Dendritic cell treated with granulocyte-macrophage colony-stimulating factor and Interleukin-4, amounts not matched to agents 40 ng/mL and 50 ng/mL, for 4 days (primary cell): ENCODE measurements at regions of chr20 and their contacts with region 1.

Region 1: DNA sequence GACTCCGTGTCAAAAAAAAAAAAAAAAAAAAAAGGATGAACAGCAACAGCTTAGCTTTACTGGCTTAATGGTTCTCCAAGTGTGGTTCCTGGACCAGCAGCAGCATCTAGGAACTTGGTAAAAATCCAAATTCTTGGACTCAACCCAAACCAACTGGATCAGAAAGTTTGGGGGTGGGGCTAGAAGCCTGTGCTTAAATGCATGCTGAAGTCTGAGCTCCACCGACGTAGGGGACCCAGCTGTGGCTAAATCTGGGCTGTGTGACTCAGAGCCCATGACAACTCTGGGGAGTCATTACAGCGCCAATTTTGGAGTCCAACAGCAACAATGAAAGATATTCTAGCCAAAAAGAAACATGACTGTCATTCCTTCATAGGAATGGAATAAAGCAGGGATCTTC is 13.6 kb upstream of the CHD6 start:
- H3K4me3 Mint-ChIP-seq: no peak overlapping the region
- H3K27ac Mint-ChIP-seq: no peak overlapping the region
- H3K4me1 Mint-ChIP-seq: peaks cover 18% of the 10 kb centered on the region
- H3K27me3 Mint-ChIP-seq: no peaks in the 10 kb centered on the region

Region 2: GRCh38 chr20:41249406-41250281 is 382.2 kb before region 1 on chr20:
- intact Hi-C with region 1: no loop called
- H3K4me3 Mint-ChIP-seq: no peak overlapping the region
- H3K27ac Mint-ChIP-seq: no peak overlapping the region
- H3K4me1 Mint-ChIP-seq: peaks cover 31% of the 10 kb centered on the region
- H3K27me3 Mint-ChIP-seq: peaks cover 34% of the 10 kb centered on the region

Region 3: GRCh38 chr20:41693136-41693979 is 61.5 kb after region 1 on chr20:
- intact Hi-C with region 1: loop called (anchors 5 kb)
- H3K4me3 Mint-ChIP-seq: peak overlapping the region; percentile 82
- H3K27ac Mint-ChIP-seq: peak overlapping the region; percentile 92
- H3K4me1 Mint-ChIP-seq: peaks cover 33% of the 10 kb centered on the region
- H3K27me3 Mint-ChIP-seq: peaks cover 17% of the 10 kb centered on the region